ENCODE measurements at regions of chr14 and their contacts with region 1.

Region 1: DNA sequence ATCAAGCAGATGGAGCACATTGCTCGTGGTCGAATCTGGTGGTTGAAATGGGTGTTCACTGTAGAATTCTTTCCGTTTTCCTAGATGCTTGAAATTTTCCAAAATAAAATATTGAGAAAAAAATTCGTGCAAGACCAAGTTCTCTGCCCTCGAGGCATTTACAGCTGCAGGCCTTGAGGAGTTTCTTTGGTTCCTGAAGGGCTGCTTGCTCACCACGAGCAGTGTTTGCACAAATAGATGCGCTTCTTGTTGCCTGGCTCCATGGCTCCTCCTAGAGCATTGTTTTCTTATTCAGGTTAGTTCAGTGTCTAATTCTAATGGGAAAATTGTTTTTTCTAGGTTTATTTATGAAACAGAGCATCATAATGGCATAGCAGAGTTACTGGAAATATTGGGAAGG is 74.5 kb upstream of the DYNC1H1 start:
- DNase-seq: no peak
- H3K4me3 Mint-ChIP-seq: no peak overlapping the region
- H3K27ac Mint-ChIP-seq: no peak overlapping the region
- H3K4me1 Mint-ChIP-seq: no peaks in the 10 kb centered on the region
- H3K27me3 Mint-ChIP-seq: no peaks in the 10 kb centered on the region
- CTCF ChIP-seq: no peak

Region 2: DNA sequence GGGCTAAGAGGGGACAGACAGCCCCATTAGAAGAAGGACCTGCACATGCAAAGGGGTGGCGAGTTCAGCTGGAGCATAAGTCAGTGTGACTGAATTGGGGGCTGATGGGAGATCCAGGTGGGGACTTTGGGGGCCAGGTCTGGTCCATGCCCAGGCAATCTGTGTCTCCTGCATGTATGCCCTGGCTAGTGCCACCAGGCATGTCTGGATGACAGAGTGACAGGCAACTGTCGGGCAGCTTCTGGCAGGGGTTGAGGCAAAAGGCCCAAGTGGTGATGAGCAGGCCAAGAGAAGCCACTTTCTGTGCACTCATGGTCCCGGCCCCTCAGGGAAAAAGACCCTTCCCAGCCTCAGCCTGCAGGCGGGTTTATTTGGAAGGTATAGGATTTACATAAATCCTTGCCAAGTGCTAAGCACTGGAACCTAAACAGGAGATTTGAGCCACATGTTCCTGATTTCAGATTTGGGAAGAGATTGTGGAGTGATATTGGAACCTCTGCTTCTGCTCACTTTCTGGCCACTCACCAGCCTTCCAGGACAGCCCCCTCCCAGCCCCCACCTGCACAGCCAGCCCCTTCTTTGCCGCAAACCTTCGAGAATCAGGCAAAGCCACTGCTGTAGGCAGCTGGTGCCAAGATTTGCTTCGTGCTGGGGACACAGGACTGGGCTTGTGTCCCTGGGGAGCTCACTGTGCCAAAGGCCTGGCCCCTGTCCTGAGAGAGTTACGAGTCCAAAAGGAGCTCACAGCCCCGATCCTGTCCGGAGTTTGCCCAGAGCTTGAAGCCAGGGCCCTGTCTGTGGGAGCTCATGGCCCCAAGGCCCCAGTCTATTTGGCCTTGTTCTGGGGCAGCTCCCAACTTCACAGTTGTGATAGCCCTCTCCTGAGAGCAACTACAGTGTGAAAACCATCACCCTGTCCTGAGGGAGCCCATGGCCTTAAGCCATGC is 753.8 kb before region 1 on chr14:
- CTCF ChIA-PET with region 1: no interaction called
- intact Hi-C with region 1: no loop called
- DNase-seq: no peak
- H3K4me3 Mint-ChIP-seq: no peak overlapping the region
- H3K27ac Mint-ChIP-seq: no peak overlapping the region
- H3K4me1 Mint-ChIP-seq: no peaks in the 10 kb centered on the region
- H3K27me3 Mint-ChIP-seq: peaks cover 1% of the 10 kb centered on the region
- CTCF ChIP-seq: no peak

Region 3: GRCh38 chr14:101917413-101918017 is 27.6 kb after region 1 on chr14:
- CTCF ChIA-PET with region 1: no interaction called
- intact Hi-C with region 1: no loop called
- DNase-seq: no peak
- H3K4me3 Mint-ChIP-seq: no peak overlapping the region
- H3K27ac Mint-ChIP-seq: no peak overlapping the region
- H3K4me1 Mint-ChIP-seq: no peaks in the 10 kb centered on the region
- H3K27me3 Mint-ChIP-seq: no peaks in the 10 kb centered on the region
- CTCF ChIP-seq: no peak

Region 4: GRCh38 chr14:102063091-102063802 is 173.3 kb after region 1 on chr14:
- CTCF ChIA-PET with region 1: no interaction called
- intact Hi-C with region 1: no loop called
- DNase-seq: peak; percentile 90
- H3K4me3 Mint-ChIP-seq: peak overlapping the region; percentile 49
- H3K27ac Mint-ChIP-seq: no peak overlapping the region
- H3K4me1 Mint-ChIP-seq: peaks cover 13% of the 10 kb centered on the region
- H3K27me3 Mint-ChIP-seq: no peaks in the 10 kb centered on the region
- CTCF ChIP-seq: peak; percentile 36

Region 5: DNA sequence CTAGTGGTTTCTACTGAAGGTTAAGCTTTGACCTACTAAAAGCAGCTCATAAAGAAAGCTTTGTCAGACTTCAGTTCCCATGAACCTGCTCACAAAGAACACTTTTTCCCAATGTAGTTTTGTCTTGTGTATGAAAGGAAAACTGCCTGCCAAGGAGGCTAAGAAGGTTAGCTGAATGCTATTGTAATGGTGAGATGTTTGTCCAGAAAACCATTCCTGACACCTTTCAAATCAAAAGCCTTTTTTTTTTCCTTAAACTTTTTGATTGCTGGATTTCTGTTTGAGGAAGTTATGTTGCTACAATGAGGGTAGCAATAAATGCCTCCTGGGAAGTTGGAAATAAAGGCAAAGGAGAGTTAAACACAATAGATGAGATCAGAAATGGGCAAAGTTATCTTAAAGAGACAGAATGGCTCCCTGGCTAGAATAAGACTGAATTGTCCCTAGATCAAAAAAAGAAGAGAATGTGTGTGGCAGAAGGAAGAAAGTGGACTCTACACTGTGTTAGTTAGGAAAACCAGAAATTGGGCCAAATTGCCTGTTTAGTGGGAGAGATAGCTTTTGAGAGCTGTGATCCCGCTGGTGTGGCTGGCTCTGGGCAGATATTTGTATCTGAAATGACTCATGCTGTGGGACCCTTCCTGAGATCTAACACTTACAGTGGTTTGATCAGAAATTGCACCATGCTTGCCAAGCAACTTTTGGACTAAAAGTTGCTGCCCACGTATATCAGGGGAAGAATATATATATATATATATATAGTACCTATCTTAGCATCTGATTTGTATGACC is 500.4 kb after region 1 on chr14:
- CTCF ChIA-PET with region 1: no interaction called
- intact Hi-C with region 1: loop called (anchors 5 kb)
- DNase-seq: peak; percentile 28
- H3K4me3 Mint-ChIP-seq: peak overlapping the region; percentile 11
- H3K27ac Mint-ChIP-seq: peak overlapping the region; percentile 93
- H3K4me1 Mint-ChIP-seq: peaks cover 18% of the 10 kb centered on the region
- H3K27me3 Mint-ChIP-seq: no peaks in the 10 kb centered on the region
- CTCF ChIP-seq: no peak

Region 6: GRCh38 chr14:103641181-103641580 is 1751.3 kb after region 1 on chr14:
- CTCF ChIA-PET with region 1: no interaction called
- intact Hi-C with region 1: no loop called
- DNase-seq: no peak
- H3K4me3 Mint-ChIP-seq: no peak overlapping the region
- H3K27ac Mint-ChIP-seq: no peak overlapping the region
- H3K4me1 Mint-ChIP-seq: no peaks in the 10 kb centered on the region
- H3K27me3 Mint-ChIP-seq: no peaks in the 10 kb centered on the region
- CTCF ChIP-seq: no peak

Measured in Calu3 (cell line).